PC-3 (cell line): ENCODE measurements at regions of chr10 and their contacts with region 1.

Region 1: DNA sequence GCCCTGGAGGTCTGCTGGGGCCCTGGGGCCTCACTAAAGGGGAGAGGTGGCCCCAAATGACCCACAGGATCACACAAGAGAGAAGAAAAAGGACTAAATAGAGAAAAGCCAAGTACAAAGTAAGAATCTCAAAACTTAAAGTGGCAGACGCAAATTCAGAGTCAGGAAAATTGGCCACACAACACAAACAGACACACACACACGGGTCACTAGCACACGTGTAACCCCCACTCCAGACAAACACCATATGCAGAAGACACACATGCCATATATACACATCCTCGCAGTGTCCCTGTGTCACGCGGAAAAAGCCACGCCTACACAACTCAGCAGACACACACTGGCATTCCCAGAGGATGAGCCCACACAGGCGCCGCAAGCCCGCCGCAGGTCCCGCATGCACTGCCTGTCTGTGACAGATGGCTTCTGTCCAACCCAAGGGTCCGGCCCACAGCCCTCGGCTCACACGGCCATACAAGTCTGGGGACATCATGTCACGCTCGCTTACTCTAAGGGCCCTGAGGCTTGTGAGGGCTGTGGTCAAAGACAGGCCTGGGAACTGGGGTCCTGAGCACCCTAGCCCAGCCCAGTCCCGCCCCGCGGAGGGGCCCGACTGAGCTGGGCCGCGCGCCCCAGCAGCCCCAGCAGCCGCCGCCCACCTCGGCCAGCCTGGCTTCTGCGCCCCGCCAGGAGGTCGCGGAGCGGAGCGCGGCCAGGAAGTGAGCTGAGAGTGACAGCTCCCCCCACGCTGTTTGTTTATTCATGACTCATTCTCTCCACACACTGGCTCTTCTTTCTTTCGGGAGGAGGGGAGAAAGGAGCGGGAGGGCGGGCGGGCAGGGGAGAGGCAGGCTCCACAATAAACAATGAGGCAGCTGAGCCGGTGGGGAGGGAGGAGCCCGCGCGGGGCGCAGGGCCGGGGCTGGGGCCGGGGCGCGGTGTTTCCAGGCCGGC is 95.5 kb upstream of the ZMIZ1 start:
- DNase-seq: peak; percentile 100
- ATAC-seq: peak; percentile 63
- H3K4me3 ChIP-seq: peak overlapping the region; percentile 60
- H3K27ac ChIP-seq: peak overlapping the region; percentile 79
- H3K4me1 ChIP-seq: peaks cover 39% of the 10 kb centered on the region
- H3K27me3 ChIP-seq: no peaks in the 10 kb centered on the region
- CTCF ChIP-seq: peak; percentile 20; the same call in 1 of the 2 replicates

Region 2: DNA sequence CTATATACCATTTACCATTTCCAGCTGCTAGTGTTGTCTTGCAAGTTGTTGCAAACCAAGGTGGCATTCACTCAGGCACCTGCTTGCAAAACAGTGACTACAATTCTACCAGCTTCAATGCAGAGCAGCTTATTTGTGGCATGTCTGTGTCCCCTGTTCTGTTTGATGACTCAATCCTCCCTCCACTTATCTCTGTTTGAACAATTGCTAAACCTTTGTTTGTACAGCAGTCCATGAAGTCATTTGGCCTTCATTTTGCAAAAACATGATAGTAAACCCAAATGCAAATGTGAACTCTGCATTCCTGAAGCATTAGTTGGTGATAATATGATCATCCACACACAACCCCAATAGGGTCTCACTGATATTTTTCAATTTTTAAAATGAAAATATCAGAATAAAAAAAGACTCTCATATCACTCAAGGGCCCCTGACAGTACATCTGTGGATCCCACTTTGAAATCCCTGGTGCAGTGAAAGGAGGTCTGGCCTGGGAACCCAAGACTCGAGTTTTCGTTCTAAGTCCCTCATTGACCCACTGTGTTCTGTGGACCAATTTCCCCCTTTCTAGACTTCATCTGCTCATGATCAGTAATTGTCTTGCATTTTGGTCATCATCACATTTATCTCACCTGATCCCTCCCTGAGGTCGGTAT is 514.1 kb before region 1 on chr10:
- CTCF ChIA-PET with region 1: no interaction called
- POLR2A ChIA-PET with region 1: no interaction called
- intact Hi-C with region 1: loop called (anchors 1 kb)
- DNase-seq: peak; percentile 100
- ATAC-seq: peak; percentile 91
- H3K4me3 ChIP-seq: peak overlapping the region; percentile 6; the same call in 1 of the 2 replicates
- H3K27ac ChIP-seq: peak overlapping the region; percentile 85
- H3K4me1 ChIP-seq: peaks cover 57% of the 10 kb centered on the region
- H3K27me3 ChIP-seq: no peaks in the 10 kb centered on the region
- CTCF ChIP-seq: no peak

Region 3: GRCh38 chr10:78765726-78766335 is 207.4 kb before region 1 on chr10:
- CTCF ChIA-PET with region 1: interaction called, 10 read pairs
- POLR2A ChIA-PET with region 1: no interaction called
- intact Hi-C with region 1: no loop called
- DNase-seq: no peak
- ATAC-seq: no peak
- H3K4me3 ChIP-seq: no peak overlapping the region
- H3K27ac ChIP-seq: no peak overlapping the region
- H3K4me1 ChIP-seq: no peaks in the 10 kb centered on the region
- H3K27me3 ChIP-seq: no peaks in the 10 kb centered on the region
- CTCF ChIP-seq: no peak

Region 4: DNA sequence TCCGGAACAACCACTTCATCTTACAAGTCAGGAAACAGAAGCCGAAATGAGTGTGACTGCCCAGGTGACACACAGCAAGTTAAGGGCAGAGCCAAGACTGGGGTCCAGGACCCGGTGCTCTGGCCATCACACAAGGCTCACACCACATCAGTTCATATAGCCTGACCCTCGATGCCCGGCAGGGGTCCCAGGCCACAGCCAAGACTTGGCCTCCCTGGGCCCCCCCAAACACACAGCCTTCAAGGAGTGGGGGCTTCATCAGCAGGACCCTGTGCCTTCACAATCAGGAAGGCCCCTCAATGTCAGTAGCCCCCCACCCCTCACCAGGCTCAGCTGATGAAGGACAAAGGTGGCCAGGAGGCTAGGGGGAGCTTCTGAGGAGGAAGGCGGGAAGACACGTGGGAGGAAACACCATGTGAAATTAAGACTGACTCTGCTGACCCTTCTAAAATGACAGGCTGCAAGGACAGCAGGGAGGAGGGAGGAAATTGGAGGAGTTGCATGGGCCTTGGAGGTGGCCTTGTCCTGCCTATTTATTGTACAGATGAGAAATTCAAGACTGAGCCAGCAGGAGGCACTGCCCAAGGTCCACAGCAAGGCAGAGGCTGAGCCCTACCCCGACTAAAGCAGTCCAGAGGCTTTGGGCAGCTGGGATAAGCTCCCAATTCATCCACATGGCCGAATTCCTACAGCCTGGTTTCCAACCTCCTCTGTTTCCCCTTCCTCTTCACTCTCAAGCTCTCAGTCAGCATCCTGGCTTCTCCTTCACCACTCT is 120.6 kb before region 1 on chr10:
- CTCF ChIA-PET with region 1: no interaction called
- POLR2A ChIA-PET with region 1: no interaction called
- intact Hi-C with region 1: no loop called
- DNase-seq: peak; percentile 75
- ATAC-seq: peak; percentile 61
- H3K4me3 ChIP-seq: no peak overlapping the region
- H3K27ac ChIP-seq: no peak overlapping the region
- H3K4me1 ChIP-seq: no peaks in the 10 kb centered on the region
- H3K27me3 ChIP-seq: peaks cover 5% of the 10 kb centered on the region; the same call in 1 of the 2 replicates
- CTCF ChIP-seq: peak; percentile 94

Region 5: DNA sequence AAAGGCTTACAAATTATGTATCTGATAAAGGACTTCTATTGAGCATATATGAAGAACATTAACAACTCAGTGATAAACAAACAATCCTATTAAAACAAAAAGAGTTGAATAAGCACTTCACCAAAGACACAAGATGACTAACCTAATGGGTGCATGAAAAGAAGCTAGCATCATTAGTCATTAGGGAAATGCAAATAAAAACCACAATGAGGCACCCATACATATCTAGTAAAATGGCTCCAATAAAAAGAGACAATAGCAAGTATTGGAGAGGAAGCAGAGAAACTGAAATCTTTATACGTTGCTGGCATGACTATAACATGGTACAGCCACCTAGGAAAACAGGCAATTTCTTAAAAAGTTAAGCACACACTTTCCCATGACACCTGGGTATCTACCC is 18.0 kb after region 1 on chr10:
- CTCF ChIA-PET with region 1: interaction called, 21 read pairs
- POLR2A ChIA-PET with region 1: interaction called, 6 read pairs
- intact Hi-C with region 1: loop called (anchors 1 kb)
- DNase-seq: peak; percentile 100
- ATAC-seq: peak; percentile 97
- H3K4me3 ChIP-seq: 0 out of 2 replicates have a peak overlapping the region, but pooled peaks have one; percentile 0
- H3K27ac ChIP-seq: peak overlapping the region; percentile 36
- H3K4me1 ChIP-seq: peaks cover 19% of the 10 kb centered on the region
- H3K27me3 ChIP-seq: no peaks in the 10 kb centered on the region
- CTCF ChIP-seq: no peak; the same call in 1 of the 2 replicates

Region 6: DNA sequence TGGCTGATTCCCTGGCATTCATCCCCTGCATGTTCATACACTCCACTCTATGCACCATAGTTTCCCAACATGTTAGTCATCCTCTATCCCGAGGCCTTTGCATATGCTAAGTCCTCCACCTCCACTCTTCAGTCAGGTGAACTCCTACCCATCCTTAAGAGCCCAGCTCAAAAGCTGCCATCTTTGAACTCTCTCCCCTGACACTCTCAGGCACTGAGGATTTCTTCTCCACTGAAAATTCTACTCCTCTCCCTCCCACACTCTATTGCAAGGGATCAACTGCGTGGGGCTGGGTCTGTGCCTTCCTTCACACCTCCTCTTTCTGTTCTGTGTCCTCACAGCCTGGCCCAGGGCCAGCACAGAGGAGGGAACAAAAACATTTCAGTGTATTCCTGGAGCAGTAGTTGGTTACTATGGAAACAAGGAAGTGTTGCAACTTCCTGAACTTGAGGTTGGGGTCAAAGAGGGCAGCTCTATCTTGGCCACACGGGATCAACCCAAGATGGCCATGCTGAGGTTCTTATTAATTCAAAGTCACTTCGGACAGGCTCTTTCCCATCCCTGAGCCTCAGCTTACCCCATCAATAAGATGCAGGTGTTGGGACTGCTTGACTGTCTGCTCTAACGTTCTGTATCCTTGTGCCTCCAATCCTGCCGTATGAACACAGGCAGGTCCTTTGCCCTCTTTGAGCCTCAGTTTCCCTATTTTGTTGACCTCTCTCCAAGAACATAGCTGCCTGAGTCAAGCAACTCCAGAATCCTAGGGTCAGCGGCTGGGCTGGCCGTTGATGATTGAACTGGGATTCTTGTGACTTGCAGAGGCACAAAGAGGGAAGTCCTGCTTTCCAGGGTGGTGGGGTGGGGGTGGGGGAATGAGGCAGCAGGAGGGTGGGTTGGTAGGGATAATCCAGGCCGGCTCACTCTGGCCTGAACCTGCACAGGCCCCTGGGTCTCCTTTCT is 111.1 kb after region 1 on chr10:
- CTCF ChIA-PET with region 1: no interaction called
- POLR2A ChIA-PET with region 1: no interaction called
- intact Hi-C with region 1: no loop called
- DNase-seq: peak; percentile 77
- ATAC-seq: peak; percentile 1; the same call in 1 of the 2 replicates
- H3K4me3 ChIP-seq: no peak overlapping the region
- H3K27ac ChIP-seq: no peak overlapping the region
- H3K4me1 ChIP-seq: peaks cover 43% of the 10 kb centered on the region
- H3K27me3 ChIP-seq: no peaks in the 10 kb centered on the region
- CTCF ChIP-seq: no peak

Region 7: DNA sequence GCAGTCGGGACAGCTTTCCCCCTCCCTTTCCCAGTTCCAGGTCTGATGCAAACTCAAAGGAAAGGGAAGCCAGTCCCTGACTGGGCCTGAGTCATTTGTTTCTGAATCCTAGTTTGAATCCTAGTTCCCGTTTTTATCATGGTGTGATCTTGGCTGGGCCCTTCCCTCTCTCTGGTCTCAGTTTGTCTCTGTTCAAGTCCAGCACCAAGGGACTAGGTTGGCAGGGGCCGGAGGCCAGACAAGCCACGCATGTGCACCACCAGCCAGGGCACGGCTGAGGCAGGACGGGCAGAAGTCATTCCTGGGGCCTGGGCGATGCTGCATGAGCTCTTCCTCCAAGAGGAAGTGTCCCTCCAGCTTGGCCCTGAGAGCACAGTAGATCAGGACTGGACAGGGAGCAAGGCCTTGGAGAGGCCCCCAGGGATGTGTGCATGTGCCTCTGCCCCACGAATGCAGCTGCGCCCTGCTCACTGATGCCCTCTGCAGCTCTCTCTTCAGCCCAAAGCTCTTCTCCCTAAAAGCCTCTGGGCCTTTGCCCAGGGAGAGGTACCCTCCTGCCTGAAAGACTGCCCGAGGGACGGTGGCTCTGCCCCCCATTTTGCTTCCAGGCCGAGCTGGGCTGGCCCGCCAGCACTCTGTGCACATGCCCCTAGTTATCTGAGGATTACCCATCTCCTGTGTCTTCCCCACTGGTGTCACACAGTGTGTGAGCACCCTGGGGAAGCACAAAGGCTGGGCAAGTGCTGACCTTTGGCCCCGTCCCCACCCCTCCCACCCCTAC is 182.3 kb after region 1 on chr10:
- CTCF ChIA-PET with region 1: interaction called, 16 read pairs
- POLR2A ChIA-PET with region 1: interaction called, 7 read pairs
- intact Hi-C with region 1: loop called (anchors 1 kb)
- DNase-seq: peak; percentile 93
- ATAC-seq: no peak
- H3K4me3 ChIP-seq: no peak overlapping the region
- H3K27ac ChIP-seq: peak overlapping the region; percentile 47
- H3K4me1 ChIP-seq: peaks cover 82% of the 10 kb centered on the region
- H3K27me3 ChIP-seq: no peaks in the 10 kb centered on the region
- CTCF ChIP-seq: no peak

Region 8: GRCh38 chr10:79242620-79243152 is 269.5 kb after region 1 on chr10:
- CTCF ChIA-PET with region 1: no interaction called
- POLR2A ChIA-PET with region 1: no interaction called
- intact Hi-C with region 1: no loop called
- DNase-seq: peak; percentile 99
- ATAC-seq: peak; percentile 83
- H3K4me3 ChIP-seq: peak overlapping the region; percentile 70
- H3K27ac ChIP-seq: no peak overlapping the region; the same call in 1 of the 2 replicates
- H3K4me1 ChIP-seq: peaks cover 21% of the 10 kb centered on the region
- H3K27me3 ChIP-seq: no peaks in the 10 kb centered on the region
- CTCF ChIP-seq: no peak

Region 9: GRCh38 chr10:79322616-79323543 is 349.7 kb after region 1 on chr10:
- CTCF ChIA-PET with region 1: no interaction called
- POLR2A ChIA-PET with region 1: no interaction called
- intact Hi-C with region 1: loop called (anchors 10 kb)
- DNase-seq: peak; percentile 100
- ATAC-seq: peak; percentile 80
- H3K4me3 ChIP-seq: no peak overlapping the region
- H3K27ac ChIP-seq: peak overlapping the region; percentile 69
- H3K4me1 ChIP-seq: peaks cover 52% of the 10 kb centered on the region
- H3K27me3 ChIP-seq: no peaks in the 10 kb centered on the region
- CTCF ChIP-seq: no peak